ENCODE measurements at regions of chr11 and their contacts with region 1.

Region 1: GRCh38 chr11:29773656-29774264 is 243.1 kb downstream of the KCNA4 start:
- DNase-seq: peak in 4 of 5 donors; percentile 23 to 63 (median 43)
- ATAC-seq: peak; percentile 98 to 100 (median 100)
- H3K4me3 ChIP-seq: no peak overlapping the region
- H3K27ac ChIP-seq: peak overlapping the region in 11 of 12 donors; percentile 26 to 80 (median 60)
- H3K4me1 ChIP-seq: peaks cover 0 to 14% (median 0%) of the 10 kb centered on the region in 12 donors
- H3K27me3 ChIP-seq: no peaks in the 10 kb centered on the region
- CTCF ChIP-seq: no peak
- POLR2A ChIP-seq: no peak

Region 2: DNA sequence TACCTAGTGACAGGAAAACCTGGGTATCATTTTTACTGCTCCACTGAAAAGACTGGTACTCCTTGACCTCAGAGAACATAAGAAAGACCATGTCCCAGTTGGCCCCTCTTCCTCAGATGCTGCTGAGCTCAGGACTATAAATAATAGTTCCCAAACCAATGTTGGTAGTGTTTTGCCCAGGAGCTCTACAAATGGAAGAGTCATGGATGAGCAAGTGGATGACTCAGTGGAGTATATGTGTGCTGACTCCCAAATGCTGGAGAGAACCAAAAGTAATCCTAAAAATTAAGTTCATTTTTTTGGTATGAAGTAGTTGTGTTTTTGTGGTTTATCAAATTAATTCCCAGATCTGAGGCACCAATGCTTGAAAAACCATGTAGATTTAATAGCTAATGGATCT is 238.9 kb before region 1 on chr11:
- intact Hi-C with region 1: loop called in 3 of 10 experiments (anchors 5 to 10 kb)
- DNase-seq: no peak
- ATAC-seq: no peak
- H3K4me3 ChIP-seq: no peak overlapping the region
- H3K27ac ChIP-seq: no peak overlapping the region
- H3K4me1 ChIP-seq: peaks cover 0 to 14% (median 0%) of the 10 kb centered on the region in 12 donors
- H3K27me3 ChIP-seq: no peaks in the 10 kb centered on the region
- CTCF ChIP-seq: no peak
- POLR2A ChIP-seq: no peak

Region 3: DNA sequence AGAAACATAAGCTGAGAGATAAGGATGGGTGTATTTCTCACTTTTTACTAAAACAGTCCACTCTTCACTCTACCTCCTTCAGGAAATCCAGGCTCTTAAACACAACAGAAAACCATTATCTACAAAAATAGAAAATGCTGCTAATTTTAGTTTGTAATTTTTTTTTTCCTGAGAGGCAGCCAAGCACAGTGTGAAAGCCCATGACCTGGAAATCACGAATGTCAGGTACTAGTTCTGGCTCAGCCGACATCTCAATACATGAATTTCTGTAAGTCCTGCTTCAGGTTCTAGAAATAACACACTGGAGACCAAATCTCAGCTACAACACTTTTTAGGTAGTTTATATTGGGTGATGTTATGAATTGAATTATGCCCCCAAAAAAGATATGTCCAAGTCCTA is 65.8 kb before region 1 on chr11:
- intact Hi-C with region 1: no loop called
- DNase-seq: no peak
- ATAC-seq: peak in 2 of 4 donors; percentile 43 to 52
- H3K4me3 ChIP-seq: no peak overlapping the region
- H3K27ac ChIP-seq: no peak overlapping the region
- H3K4me1 ChIP-seq: peaks cover 0 to 14% (median 0%) of the 10 kb centered on the region in 12 donors
- H3K27me3 ChIP-seq: no peaks in the 10 kb centered on the region
- CTCF ChIP-seq: no peak
- POLR2A ChIP-seq: no peak

Region 4: GRCh38 chr11:30016588-30017363 is 243.0 kb after region 1 on chr11 and contains the start of gene KCNA4:
- intact Hi-C with region 1: loop called in 1 of 10 experiments (anchors 10 kb)
- DNase-seq: peak; percentile 31 to 64 (median 42)
- ATAC-seq: peak; percentile 74 to 95 (median 91)
- H3K4me3 ChIP-seq: peak within 1 kb of the TSS; percentile 22 to 75 (median 57)
- H3K27ac ChIP-seq: peak within 1 kb of the TSS in 7 of 12 donors; percentile 14 to 73 (median 37)
- H3K4me1 ChIP-seq: peaks cover 0 to 9% (median 0%) of the 10 kb centered on the region in 12 donors
- H3K27me3 ChIP-seq: peaks cover 0 to 41% (median 9%) of the 10 kb centered on the region in 9 donors
- CTCF ChIP-seq: peak in 11 of 12 donors; percentile 11 to 51 (median 34)
- POLR2A ChIP-seq: no peak
- total RNA-seq, gene KCNA4: 3.2 to 12.2 (median 7.1) TPM

Measured in heart left ventricle (tissue), 16 donors.